Sigmoid colon (tissue), 7 donors: ENCODE measurements at regions of chr16 and their contacts with region 1.

Region 1: GRCh38 chr16:57447186-57447962 is at the starts of genes CIAPIN1 and COQ9:
- DNase-seq: peak; percentile 98
- H3K4me3 ChIP-seq: peak within 1 kb of the TSS; percentile 81 to 99 (median 96)
- H3K27ac ChIP-seq: peak within 1 kb of the TSS; percentile 89 to 97 (median 94)
- H3K4me1 ChIP-seq: peaks cover 0 to 31% (median 19%) of the 10 kb centered on the region in 4 donors
- H3K27me3 ChIP-seq: no peaks in the 10 kb centered on the region
- CTCF ChIP-seq: no peak
- EP300 ChIP-seq: no peak
- POLR2A ChIP-seq: peak; percentile 89 to 91
- total RNA-seq, gene CIAPIN1: 17.1 to 22.5 (median 20.1) TPM
- total RNA-seq, gene COQ9: 61.4 to 74.5 (median 71.3) TPM

Region 2: GRCh38 chr16:57462209-57462977 is 15.0 kb after region 1 on chr16 and contains the start of gene POLR2C:
- intact Hi-C with region 1: loop called (anchors 2 kb)
- DNase-seq: peak; percentile 93
- H3K4me3 ChIP-seq: peak within 1 kb of the TSS; percentile 93 to 99 (median 98)
- H3K27ac ChIP-seq: peak within 1 kb of the TSS; percentile 87 to 92 (median 90)
- H3K4me1 ChIP-seq: peaks cover 0 to 25% (median 21%) of the 10 kb centered on the region in 4 donors
- H3K27me3 ChIP-seq: no peaks in the 10 kb centered on the region
- CTCF ChIP-seq: peak; percentile 86 to 95 (median 94)
- EP300 ChIP-seq: no peak
- POLR2A ChIP-seq: peak; percentile 88 to 94
- total RNA-seq, gene POLR2C: 60.7 to 141 (median 101) TPM

Region 3: DNA sequence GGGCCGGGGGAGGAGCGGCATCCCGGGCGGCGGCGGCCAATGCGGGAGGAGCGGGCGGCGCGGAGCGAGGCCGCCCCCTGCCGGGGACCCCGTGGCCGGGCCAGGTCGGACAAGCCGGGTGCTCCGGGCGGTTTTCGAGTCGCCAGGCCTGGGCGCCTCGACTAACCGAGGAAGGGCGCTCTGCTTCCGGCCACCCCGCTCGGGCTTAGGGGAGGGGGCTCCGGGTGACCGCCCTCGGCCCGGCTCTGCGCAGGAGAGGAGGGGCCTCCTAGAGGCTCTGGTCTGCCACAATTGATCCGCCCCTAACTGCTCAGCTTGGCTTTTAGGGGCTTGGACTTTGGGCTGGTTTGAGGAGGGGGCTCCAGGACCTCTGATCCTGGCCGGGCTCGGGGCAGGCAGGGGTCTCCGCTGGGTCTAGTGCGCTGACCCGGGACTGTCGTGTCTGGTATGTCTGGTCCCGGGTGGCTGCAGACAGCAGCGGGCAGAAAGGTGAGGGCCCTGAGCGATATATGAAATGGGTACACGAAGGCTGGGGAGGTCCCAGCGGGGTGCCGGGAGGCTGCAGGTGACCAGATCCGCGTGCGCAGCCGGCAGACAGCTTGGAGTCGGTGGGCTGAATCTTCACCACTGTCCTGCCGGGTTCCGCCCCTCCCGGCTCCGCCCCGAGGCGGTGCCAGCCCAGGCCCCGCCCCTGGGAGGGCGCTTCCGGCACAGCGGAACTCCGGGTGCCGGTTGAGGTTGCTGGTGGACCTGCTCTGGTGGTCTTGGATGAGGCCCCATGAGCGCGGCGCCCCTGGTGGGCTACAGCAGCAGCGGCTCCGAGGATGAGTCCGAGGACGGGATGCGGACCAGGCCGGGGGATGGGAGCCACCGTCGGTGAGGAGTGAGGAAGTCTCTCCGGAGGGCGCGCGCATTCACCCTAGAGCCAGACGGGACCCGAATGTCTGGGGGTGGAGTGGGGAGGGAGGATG is 553.6 kb after region 1 on chr16 and contains the start of gene USB1:
- intact Hi-C with region 1: loop called (anchors 10 kb)
- DNase-seq: peak; percentile 92
- H3K4me3 ChIP-seq: peak within 1 kb of the TSS; percentile 48 to 91 (median 82)
- H3K27ac ChIP-seq: peak within 1 kb of the TSS; percentile 93 to 98 (median 96)
- H3K4me1 ChIP-seq: peaks cover 0 to 45% (median 30%) of the 10 kb centered on the region in 4 donors
- H3K27me3 ChIP-seq: no peaks in the 10 kb centered on the region
- CTCF ChIP-seq: peak in 3 of 4 experiments; percentile 22 to 63 (median 58)
- EP300 ChIP-seq: no peak
- POLR2A ChIP-seq: peak; percentile 69 to 79
- total RNA-seq, gene USB1: 19.9 to 44.9 (median 34.9) TPM